CD8-positive, alpha-beta T cell (primary cell): ENCODE measurements at regions of chr13 and their contacts with region 1.

Region 1: DNA sequence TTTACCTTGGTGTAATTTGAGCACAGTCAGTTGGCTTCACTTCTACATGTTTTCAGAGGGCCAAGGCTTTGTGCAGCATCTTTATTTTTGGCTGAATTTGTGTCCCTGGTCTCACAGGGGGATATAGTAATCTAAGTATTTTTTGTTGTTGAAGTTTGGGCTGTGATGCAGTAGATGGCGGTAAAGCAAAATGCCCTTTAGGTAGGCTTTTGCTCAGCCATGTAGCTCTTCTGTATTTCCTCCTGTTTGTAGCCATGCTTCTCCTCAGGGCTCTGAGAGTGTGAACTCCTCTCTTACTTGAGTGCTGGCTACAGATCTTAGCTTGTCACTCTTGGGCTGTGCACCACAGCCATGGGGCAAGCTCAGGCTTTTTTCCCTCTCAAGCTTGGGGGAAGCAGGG is 328.6 kb downstream of the SLITRK5 start:
- DNase-seq: no peak
- ATAC-seq: no peak
- H3K4me3 ChIP-seq: no peak overlapping the region
- H3K4me3 Mint-ChIP-seq: no peak overlapping the region
- H3K27ac ChIP-seq: no peak overlapping the region
- H3K27ac Mint-ChIP-seq: no peak overlapping the region
- H3K4me1 ChIP-seq: no peaks in the 10 kb centered on the region
- H3K4me1 Mint-ChIP-seq: no peaks in the 10 kb centered on the region
- H3K27me3 ChIP-seq: no peaks in the 10 kb centered on the region
- H3K27me3 Mint-ChIP-seq: no peaks in the 10 kb centered on the region
- CTCF ChIP-seq: no peak

Region 2: DNA sequence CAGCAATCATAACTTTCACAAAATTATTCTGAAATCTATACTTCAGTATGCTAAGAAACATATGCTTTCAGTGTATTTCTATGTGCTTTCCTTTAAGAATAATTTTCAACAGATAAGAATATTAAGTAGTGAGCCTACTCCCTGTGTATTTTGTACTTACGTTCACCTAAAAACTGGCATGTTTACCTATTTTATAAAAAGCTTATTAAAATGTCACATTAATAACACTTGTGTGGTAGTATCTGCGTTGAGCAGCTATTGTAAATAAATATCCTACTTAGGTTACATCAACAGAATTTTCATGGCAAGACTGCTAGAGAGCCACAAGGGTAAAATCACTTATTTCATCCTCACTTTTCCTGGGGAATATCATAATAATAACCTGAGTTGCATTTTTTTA is 442.0 kb before region 1 on chr13:
- CTCF ChIA-PET with region 1: no interaction called
- POLR2A ChIA-PET with region 1: no interaction called
- intact Hi-C with region 1: no loop called
- DNase-seq: no peak
- ATAC-seq: no peak
- H3K4me3 ChIP-seq: no peak overlapping the region
- H3K4me3 Mint-ChIP-seq: no peak overlapping the region
- H3K27ac ChIP-seq: no peak overlapping the region
- H3K27ac Mint-ChIP-seq: no peak overlapping the region
- H3K4me1 ChIP-seq: no peaks in the 10 kb centered on the region
- H3K4me1 Mint-ChIP-seq: no peaks in the 10 kb centered on the region
- H3K27me3 ChIP-seq: no peaks in the 10 kb centered on the region
- H3K27me3 Mint-ChIP-seq: no peaks in the 10 kb centered on the region
- CTCF ChIP-seq: no peak

Region 3: GRCh38 chr13:87954091-87954490 is 45.7 kb before region 1 on chr13:
- CTCF ChIA-PET with region 1: no interaction called
- POLR2A ChIA-PET with region 1: no interaction called
- intact Hi-C with region 1: no loop called
- DNase-seq: no peak
- ATAC-seq: no peak
- H3K4me3 ChIP-seq: no peak overlapping the region
- H3K4me3 Mint-ChIP-seq: no peak overlapping the region
- H3K27ac ChIP-seq: no peak overlapping the region
- H3K27ac Mint-ChIP-seq: no peak overlapping the region
- H3K4me1 ChIP-seq: no peaks in the 10 kb centered on the region
- H3K4me1 Mint-ChIP-seq: no peaks in the 10 kb centered on the region
- H3K27me3 ChIP-seq: no peaks in the 10 kb centered on the region
- H3K27me3 Mint-ChIP-seq: no peaks in the 10 kb centered on the region
- CTCF ChIP-seq: no peak

Region 4: DNA sequence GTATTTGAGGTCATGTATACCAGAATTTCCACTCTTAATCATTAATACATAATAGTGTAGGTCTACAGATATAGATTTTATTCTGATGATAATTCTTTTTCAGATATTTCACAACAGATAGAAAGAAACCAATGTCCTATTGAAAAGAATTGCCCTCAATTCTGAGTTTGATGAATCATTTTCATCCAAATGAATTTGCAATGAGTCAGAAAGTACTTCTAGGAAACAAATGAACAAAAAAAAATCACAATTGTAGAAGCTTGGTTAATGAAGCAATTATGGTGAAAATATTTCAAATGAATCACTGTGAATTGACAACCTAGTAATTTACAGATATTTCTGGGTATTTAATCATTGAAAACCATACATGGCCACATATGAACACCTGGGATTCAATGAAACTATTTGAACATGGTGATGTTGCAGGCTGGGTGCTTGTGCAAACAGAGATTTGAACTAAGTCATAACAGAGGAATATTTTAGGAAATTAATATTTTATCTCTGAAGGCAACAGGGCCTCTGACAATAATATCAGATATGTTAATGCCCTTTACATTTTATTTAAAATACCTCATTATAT is 32.3 kb after region 1 on chr13:
- CTCF ChIA-PET with region 1: no interaction called
- POLR2A ChIA-PET with region 1: no interaction called
- intact Hi-C with region 1: loop called in 1 of 2 experiments (anchors 2 kb)
- DNase-seq: no peak
- ATAC-seq: no peak
- H3K4me3 ChIP-seq: no peak overlapping the region
- H3K4me3 Mint-ChIP-seq: no peak overlapping the region
- H3K27ac ChIP-seq: no peak overlapping the region
- H3K27ac Mint-ChIP-seq: no peak overlapping the region
- H3K4me1 ChIP-seq: no peaks in the 10 kb centered on the region
- H3K4me1 Mint-ChIP-seq: no peaks in the 10 kb centered on the region
- H3K27me3 ChIP-seq: no peaks in the 10 kb centered on the region
- H3K27me3 Mint-ChIP-seq: no peaks in the 10 kb centered on the region
- CTCF ChIP-seq: no peak

Region 5: GRCh38 chr13:89066868-89067466 is 1067.2 kb after region 1 on chr13:
- CTCF ChIA-PET with region 1: no interaction called
- POLR2A ChIA-PET with region 1: no interaction called
- intact Hi-C with region 1: loop called in 1 of 2 experiments (anchors 5 kb)
- DNase-seq: peak in 3 of 9 experiments; percentile 26 to 51 (median 41)
- ATAC-seq: no peak
- H3K4me3 ChIP-seq: no peak overlapping the region
- H3K4me3 Mint-ChIP-seq: no peak overlapping the region
- H3K27ac ChIP-seq: no peak overlapping the region
- H3K27ac Mint-ChIP-seq: no peak overlapping the region
- H3K4me1 ChIP-seq: no peaks in the 10 kb centered on the region
- H3K4me1 Mint-ChIP-seq: no peaks in the 10 kb centered on the region
- H3K27me3 ChIP-seq: no peaks in the 10 kb centered on the region
- H3K27me3 Mint-ChIP-seq: no peaks in the 10 kb centered on the region
- CTCF ChIP-seq: peak; percentile 34